Activated CD4-positive, alpha-beta memory T cell treated with anti-CD3 and anti-CD28 coated beads, Interleukin-2, amount 10 ng/mL, durations not matched to agents 7 days and 5 days (primary cell): ENCODE measurements at regions of chr6 and their contacts with region 1.

Region 1: DNA sequence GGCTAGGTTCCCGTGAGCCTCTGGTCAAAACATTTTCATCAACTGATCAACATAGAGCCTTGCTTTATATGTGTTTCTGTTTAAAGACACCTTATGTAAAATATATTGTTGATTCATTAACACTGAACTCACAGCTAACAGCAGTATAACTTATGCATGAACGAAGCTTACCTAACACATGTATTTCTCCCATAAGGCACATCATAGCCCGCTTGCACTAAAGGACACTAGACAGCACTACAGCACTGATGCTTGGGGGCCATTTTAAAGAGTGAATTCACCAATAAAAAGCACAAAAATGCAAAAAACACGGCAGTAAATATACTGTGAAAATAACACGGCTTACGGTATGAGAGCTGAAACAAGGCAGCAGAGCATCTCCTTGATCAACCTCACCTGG is 4.0 kb downstream of the FLOT1 start:
- DNase-seq: no peak
- H3K4me3 Mint-ChIP-seq: no peak overlapping the region
- H3K27ac Mint-ChIP-seq: no peak overlapping the region
- H3K4me1 Mint-ChIP-seq: peaks cover 76% of the 10 kb centered on the region
- H3K27me3 Mint-ChIP-seq: no peaks in the 10 kb centered on the region

Region 2: GRCh38 chr6:30678964-30679726 is 59.4 kb before region 1 on chr6:
- CTCF ChIA-PET with region 1: interaction called, 626 read pairs
- POLR2A ChIA-PET with region 1: interaction called, 17 read pairs
- DNase-seq: peak; percentile 93
- H3K4me3 Mint-ChIP-seq: peak overlapping the region; percentile 93
- H3K27ac Mint-ChIP-seq: peak overlapping the region; percentile 95
- H3K4me1 Mint-ChIP-seq: peaks cover 35% of the 10 kb centered on the region
- H3K27me3 Mint-ChIP-seq: no peaks in the 10 kb centered on the region

Region 3: GRCh38 chr6:30700340-30700739 is 38.2 kb before region 1 on chr6:
- CTCF ChIA-PET with region 1: no interaction called
- POLR2A ChIA-PET with region 1: no interaction called
- DNase-seq: no peak
- H3K4me3 Mint-ChIP-seq: no peak overlapping the region
- H3K27ac Mint-ChIP-seq: no peak overlapping the region
- H3K4me1 Mint-ChIP-seq: no peaks in the 10 kb centered on the region
- H3K27me3 Mint-ChIP-seq: no peaks in the 10 kb centered on the region